Vagina (tissue), 2 donors: ENCODE measurements at regions of chr22 and their contacts with region 1.

Region 1: DNA sequence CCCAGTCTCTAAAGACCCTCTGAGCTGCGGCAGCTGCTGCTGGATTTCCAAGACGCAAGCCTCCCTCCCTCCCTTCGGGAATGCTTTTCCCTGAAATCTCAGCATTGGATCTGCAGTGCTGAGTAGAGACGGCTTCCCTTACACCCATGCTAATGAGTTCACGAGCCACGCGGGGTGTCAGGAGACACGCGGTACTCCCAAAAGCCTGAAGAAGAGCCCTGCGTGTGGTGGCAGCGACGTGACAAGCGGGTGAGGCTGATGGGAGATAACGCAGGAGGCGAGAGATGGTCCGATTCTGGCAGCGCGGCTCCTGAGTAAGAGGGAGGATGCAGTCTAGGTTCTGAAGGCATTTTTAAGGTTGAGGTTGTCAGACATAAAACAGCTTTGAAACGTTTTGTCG is 74.4 kb upstream of the ASPHD2 start:
- DNase-seq: no peak
- H3K4me3 ChIP-seq: no peak overlapping the region
- H3K27ac ChIP-seq: no peak overlapping the region
- H3K4me1 ChIP-seq: no peaks in the 10 kb centered on the region
- H3K27me3 ChIP-seq: no peaks in the 10 kb centered on the region
- CTCF ChIP-seq: no peak
- POLR2A ChIP-seq: no peak

Region 2: DNA sequence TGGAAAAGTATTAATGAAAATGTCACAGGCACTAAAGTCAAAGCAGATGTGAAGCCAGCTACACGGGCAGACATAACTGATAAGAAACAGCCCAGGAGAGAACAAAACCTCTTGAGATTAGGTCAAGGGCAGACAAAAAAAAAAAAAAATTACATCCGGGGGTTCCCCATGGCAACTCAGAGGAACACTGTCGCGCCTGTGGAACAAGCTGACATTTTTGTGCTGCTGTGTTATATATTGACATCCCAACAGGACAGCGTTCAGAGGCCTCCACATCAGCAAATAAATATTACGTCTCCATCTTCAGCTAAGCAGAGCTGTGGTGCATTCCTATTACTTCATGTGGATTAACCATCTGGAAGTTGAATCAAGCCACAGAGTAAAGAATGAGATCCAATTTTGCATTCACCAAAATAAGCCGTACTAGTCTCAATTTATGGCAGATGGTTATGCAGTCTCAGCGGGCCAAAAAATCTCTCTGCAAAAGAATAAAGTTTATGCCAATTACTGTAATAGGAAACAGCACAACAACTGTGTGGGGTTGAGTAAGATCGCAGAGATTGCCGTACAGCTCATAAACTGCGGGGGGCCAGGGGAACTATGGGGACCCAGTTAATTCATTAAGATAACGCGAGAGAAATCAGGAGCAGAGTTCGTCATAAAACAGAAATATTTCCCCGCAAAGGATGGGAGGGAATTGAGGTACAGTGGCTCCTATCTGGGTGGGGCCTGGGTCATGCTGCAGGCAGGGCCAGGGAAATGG is 1488.1 kb after region 1 on chr22:
- intact Hi-C with region 1: loop called (anchors 10 kb)
- DNase-seq: peak in 1 of 2 donors; percentile 64
- H3K4me3 ChIP-seq: no peak overlapping the region
- H3K27ac ChIP-seq: peak overlapping the region; percentile 6
- H3K4me1 ChIP-seq: peaks cover 12% of the 10 kb centered on the region
- H3K27me3 ChIP-seq: no peaks in the 10 kb centered on the region
- CTCF ChIP-seq: no peak
- POLR2A ChIP-seq: no peak